ENCODE measurements at regions of chr1 and their contacts with region 1.

Region 1: DNA sequence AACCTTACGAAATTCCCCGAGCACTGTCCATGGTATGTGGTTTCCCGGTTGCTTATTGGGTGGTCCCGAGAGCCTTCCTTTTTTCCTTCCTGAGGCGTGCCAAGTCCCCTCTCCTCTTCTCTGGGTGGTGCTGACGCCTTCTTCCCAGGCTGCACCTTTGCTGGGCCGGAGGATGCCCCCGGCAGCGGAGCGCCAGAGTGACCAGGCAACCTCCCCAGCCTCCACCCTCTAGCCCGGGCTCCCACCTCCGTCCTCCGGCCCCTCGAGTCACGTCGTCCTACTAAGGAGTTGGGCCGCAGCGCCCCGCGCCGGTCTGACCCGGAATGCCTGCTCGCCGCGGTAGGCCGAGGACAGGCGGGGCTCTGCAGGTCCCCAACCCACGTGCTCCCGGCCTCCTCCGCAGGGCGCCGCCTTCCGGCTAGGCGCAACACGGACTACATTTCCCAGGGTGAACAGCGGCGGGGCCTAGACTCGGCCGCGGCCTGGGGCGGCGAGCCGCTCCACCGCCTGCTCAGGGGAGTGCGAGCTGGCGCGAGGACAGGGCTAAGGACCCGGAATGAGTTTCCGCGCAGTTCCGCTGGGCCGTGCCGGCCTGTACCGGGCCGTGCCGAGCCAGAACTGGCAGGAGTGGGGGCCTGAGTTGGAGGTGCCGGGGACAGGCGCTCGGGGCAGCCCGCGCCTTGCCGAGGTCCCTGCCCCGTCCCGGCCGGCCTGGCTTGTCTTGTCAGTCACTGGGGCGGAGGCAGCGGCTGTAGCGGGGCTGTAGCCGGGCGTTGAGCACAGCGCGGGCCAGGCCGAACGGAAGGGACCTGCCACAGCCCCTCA is at the start of gene IPO13:
- DNase-seq: peak; percentile 94 to 99 (median 96)
- H3K4me3 ChIP-seq: peak within 1 kb of the TSS; percentile 87 to 93
- H3K4me3 Mint-ChIP-seq: peak within 1 kb of the TSS; percentile 91 to 95 (median 93)
- H3K27ac ChIP-seq: peak within 1 kb of the TSS; percentile 93
- H3K27ac Mint-ChIP-seq: peak within 1 kb of the TSS; percentile 90 to 97 (median 96)
- H3K4me1 ChIP-seq: peaks cover 29% of the 10 kb centered on the region
- H3K4me1 Mint-ChIP-seq: peaks cover 29 to 71% (median 44%) of the 10 kb centered on the region in 4 donors
- H3K27me3 ChIP-seq: no peaks in the 10 kb centered on the region
- H3K27me3 Mint-ChIP-seq: no peaks in the 10 kb centered on the region
- total RNA-seq, gene IPO13: 18.5 to 20.0 TPM

Region 2: DNA sequence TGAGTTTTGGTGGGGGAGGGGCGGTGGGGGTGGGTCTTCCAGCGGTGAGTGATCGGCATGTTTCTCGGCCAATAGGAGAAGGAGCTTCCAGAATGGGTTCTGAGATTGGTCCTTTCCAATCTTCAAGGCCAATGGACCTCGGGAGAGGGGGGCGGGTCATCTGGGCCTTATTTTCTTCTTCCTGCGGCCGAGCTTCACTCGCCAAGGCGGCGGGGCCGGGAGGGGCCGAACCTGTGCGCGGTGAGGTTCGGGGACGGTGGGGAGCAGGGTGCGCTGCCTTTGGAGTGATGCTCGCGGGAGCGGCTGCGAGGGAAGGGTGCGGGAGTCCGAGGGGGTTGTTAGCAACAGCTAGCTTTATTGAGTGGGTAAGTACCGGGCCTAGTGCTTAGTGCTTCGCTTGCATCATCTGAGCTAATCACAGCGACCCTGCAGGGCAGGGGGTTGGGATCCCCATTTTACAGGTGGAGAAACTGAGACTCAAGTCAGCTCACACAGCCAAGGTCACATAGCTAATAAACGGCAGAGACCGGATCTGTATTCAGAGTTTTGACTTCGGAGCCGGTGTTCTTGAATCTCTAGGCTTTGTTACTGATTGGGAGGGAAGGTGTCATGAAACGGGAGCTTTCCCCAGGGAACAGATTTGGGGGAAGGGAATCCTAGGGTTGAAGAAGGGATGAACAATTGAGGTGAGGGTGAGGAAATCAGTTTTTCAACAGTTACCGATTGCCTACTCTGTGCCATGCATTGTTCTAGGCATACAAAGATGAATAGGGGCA is 295.9 kb before region 1 on chr1:
- CTCF ChIA-PET with region 1: no interaction called
- POLR2A ChIA-PET with region 1: no interaction called
- intact Hi-C with region 1: loop called (anchors 5 kb)
- DNase-seq: peak; percentile 90 to 97 (median 91)
- H3K4me3 ChIP-seq: peak overlapping the region; percentile 88 to 91
- H3K4me3 Mint-ChIP-seq: peak overlapping the region; percentile 95 to 100 (median 98)
- H3K27ac ChIP-seq: peak overlapping the region; percentile 79
- H3K27ac Mint-ChIP-seq: peak overlapping the region; percentile 95 to 100 (median 97)
- H3K4me1 ChIP-seq: peaks cover 35% of the 10 kb centered on the region
- H3K4me1 Mint-ChIP-seq: peaks cover 23 to 50% (median 34%) of the 10 kb centered on the region in 4 donors
- H3K27me3 ChIP-seq: no peaks in the 10 kb centered on the region
- H3K27me3 Mint-ChIP-seq: peaks cover 0 to 2% of the 10 kb centered on the region in 2 donors

Region 3: GRCh38 chr1:43763497-43763973 is 182.9 kb before region 1 on chr1:
- CTCF ChIA-PET with region 1: interaction called, 5 read pairs
- POLR2A ChIA-PET with region 1: no interaction called
- intact Hi-C with region 1: loop called (anchors 1 kb)
- DNase-seq: peak; percentile 31 to 49 (median 40)
- H3K4me3 ChIP-seq: no peak overlapping the region
- H3K4me3 Mint-ChIP-seq: no peak overlapping the region
- H3K27ac ChIP-seq: no peak overlapping the region
- H3K27ac Mint-ChIP-seq: no peak overlapping the region
- H3K4me1 ChIP-seq: no peaks in the 10 kb centered on the region
- H3K4me1 Mint-ChIP-seq: peaks cover 0 to 9% (median 3%) of the 10 kb centered on the region in 4 donors
- H3K27me3 ChIP-seq: no peaks in the 10 kb centered on the region
- H3K27me3 Mint-ChIP-seq: no peaks in the 10 kb centered on the region

Region 4: GRCh38 chr1:43974443-43975248 is 28.2 kb after region 1 on chr1 and contains the start of gene ATP6V0B:
- CTCF ChIA-PET with region 1: interaction called, 5 read pairs
- POLR2A ChIA-PET with region 1: interaction called, 44 read pairs
- intact Hi-C with region 1: loop called (anchors 1 kb)
- DNase-seq: peak; percentile 86 to 93 (median 89)
- H3K4me3 ChIP-seq: peak within 1 kb of the TSS; percentile 90 to 96
- H3K4me3 Mint-ChIP-seq: peak within 1 kb of the TSS; percentile 91 to 98 (median 93)
- H3K27ac ChIP-seq: peak within 1 kb of the TSS; percentile 83
- H3K27ac Mint-ChIP-seq: peak within 1 kb of the TSS; percentile 95 to 98 (median 96)
- H3K4me1 ChIP-seq: peaks cover 52% of the 10 kb centered on the region
- H3K4me1 Mint-ChIP-seq: peaks cover 42 to 73% (median 58%) of the 10 kb centered on the region in 4 donors
- H3K27me3 ChIP-seq: no peaks in the 10 kb centered on the region
- H3K27me3 Mint-ChIP-seq: no peaks in the 10 kb centered on the region
- total RNA-seq, gene ATP6V0B: 59.8 to 73.9 TPM

Region 5: DNA sequence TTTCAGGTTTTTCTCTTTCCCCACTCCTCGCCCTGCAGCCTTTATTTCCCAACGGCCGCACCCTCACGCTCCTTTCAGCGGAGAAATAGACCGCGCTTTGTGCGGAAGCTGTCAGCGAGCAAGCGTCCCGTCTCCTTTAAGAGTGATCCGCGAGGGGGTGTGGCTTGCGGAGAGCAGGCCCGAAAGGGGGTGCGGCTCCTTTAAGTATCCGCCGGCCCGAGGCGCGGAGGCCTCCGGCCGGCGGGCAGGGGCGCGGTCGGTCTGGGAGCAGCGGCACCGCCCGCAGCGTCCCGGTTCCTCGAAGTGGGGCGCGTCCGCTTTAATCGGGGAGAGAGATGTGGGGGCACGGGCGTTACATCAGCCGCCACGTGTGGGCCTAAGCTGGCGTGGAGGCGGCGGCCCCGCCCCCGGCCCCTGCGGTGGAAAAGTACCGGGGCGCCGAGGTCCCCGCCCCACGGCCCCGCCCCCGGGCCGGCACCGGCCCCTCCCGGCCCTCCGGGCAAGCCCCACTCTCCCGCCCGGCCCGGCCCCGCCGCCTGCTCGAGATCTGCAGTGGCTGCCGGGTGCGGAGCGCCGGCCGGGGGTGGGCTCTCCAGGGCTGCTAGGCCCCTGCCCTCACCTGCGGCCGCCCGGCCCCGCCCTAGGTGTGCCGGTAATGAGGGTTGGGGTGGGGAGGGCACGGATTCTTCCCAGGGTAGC is 83.6 kb after region 1 on chr1:
- CTCF ChIA-PET with region 1: interaction called, 3 read pairs
- POLR2A ChIA-PET with region 1: interaction called, 4 read pairs
- intact Hi-C with region 1: loop called (anchors 1 kb)
- DNase-seq: peak; percentile 84 to 89 (median 86)
- H3K4me3 ChIP-seq: peak overlapping the region; percentile 66 to 69
- H3K4me3 Mint-ChIP-seq: peak overlapping the region; percentile 89 to 98 (median 96)
- H3K27ac ChIP-seq: peak overlapping the region; percentile 64
- H3K27ac Mint-ChIP-seq: peak overlapping the region; percentile 95 to 97 (median 96)
- H3K4me1 ChIP-seq: peaks cover 18% of the 10 kb centered on the region
- H3K4me1 Mint-ChIP-seq: peaks cover 17 to 39% (median 26%) of the 10 kb centered on the region in 4 donors
- H3K27me3 ChIP-seq: no peaks in the 10 kb centered on the region
- H3K27me3 Mint-ChIP-seq: no peaks in the 10 kb centered on the region

Measured in CD4-positive, alpha-beta memory T cell (primary cell).